Endothelial cell of umbilical vein (primary cell): ENCODE measurements at regions of chr3 and their contacts with region 1.

Region 1: DNA sequence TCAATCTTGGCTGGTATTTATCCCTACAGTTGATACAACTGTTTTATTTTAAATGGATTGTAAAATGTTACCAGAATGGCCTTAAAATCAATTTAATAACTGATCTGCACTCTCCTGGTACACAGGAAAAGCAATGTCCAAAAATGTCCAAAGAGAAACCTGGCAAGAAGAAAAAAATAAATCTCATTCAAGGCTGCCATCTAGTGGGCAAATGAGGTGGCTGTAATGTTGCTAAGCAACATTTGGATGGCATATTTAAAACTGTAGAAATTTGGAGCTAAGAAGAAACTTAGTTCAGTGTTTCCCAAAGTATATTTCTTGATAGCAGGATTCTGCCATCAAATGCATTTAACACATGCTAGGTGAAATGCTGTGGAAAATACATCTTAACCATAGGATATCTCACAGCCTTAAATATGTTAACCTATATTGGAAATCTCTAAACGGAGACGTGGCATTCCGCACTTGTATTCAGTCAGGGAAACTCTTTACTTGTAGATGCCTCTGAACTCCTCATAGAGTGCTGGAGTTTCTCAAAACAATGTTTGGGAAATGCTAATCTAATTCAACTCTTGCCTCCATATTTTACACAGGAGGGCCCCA is 216.8 kb downstream of the ERC2 start:
- DNase-seq: peak; percentile 66
- H3K4me3 ChIP-seq: no peak overlapping the region
- H3K27ac ChIP-seq: no peak overlapping the region
- H3K4me1 ChIP-seq: no peaks in the 10 kb centered on the region
- H3K27me3 ChIP-seq: no peaks in the 10 kb centered on the region
- CTCF ChIP-seq: peak; percentile 46 to 49
- POLR2A ChIP-seq: no peak

Region 2: DNA sequence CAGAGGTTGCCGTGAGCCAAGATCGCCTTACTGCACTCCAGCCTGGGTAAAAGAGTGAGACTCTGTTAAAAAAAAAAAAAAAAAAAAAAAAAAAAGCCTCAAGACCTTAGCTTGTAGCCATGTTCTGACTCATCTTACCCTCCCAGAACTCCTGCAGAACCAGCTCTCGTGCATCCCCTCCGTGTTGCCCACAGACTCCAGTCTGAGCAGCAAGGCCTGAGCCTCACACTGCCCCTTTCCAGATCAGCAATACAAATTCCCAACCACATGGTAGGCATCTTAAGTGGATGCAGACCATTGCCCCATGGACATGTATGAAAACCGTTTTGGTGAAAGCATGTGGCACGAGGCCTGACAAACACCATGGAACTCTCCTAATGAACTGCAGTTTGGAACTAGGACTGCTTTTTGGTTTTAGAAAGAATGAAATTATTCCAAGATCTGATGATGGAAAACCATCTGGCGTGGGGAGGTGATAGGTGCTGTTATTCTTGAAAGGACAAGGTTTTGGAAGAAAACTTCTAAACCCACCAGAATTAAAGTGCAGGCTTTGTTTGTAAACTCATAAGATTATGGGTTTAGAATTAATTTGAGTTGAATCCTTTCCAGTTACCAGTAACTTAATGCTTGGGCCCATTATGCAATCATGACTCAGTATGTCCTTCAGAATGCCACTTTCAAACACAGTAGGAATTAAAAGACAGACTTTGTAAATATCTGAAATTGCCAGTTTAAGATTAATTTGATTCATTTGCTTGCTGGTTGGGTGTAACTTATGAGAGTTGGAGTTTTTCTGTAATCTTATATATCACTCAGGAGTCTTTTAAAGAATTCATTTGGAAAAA is 1159.8 kb before region 1 on chr3:
- CTCF ChIA-PET with region 1: no interaction called
- POLR2A ChIA-PET with region 1: no interaction called
- dilution Hi-C with region 1: no loop called
- intact Hi-C with region 1: no loop called
- DNase-seq: no peak
- H3K4me3 ChIP-seq: no peak overlapping the region
- H3K27ac ChIP-seq: no peak overlapping the region
- H3K4me1 ChIP-seq: no peaks in the 10 kb centered on the region
- H3K27me3 ChIP-seq: no peaks in the 10 kb centered on the region
- CTCF ChIP-seq: no peak
- POLR2A ChIP-seq: no peak

Region 3: DNA sequence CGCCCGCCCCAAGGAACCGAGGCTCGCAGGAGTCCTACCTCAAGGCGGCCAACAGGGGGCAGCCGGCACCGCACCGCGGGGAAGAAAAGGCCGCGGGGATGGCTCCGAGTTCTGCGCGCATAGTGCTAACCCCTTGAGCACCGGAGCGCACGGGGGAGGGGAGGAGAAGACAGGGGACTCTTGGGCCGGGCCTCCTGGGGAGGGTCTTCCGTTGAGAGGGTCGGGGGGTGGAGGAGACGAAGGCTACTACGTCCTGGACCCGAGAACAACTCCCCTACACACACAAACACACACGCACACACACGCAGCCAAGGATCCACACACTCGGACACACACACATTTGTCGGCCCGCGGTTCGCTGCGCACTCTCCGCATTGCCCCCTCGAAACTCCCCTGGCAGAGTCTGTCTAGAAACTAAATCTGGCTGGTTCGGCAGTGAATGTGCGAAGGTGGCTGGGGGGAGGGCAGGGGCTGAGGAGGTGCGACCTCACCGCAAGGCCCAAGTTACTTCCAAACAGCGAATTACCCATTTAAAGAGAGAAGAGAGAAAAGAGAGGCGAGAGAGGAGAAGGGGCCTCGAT is 766.1 kb before region 1 on chr3:
- CTCF ChIA-PET with region 1: interaction called, 98 read pairs
- POLR2A ChIA-PET with region 1: no interaction called
- dilution Hi-C with region 1: no loop called
- intact Hi-C with region 1: loop called (anchors 1 kb)
- DNase-seq: peak; percentile 53
- H3K4me3 ChIP-seq: no peak overlapping the region
- H3K27ac ChIP-seq: no peak overlapping the region
- H3K4me1 ChIP-seq: peaks cover 14% of the 10 kb centered on the region
- H3K27me3 ChIP-seq: peaks cover 77 to 88% of the 10 kb centered on the region in 2 experiments
- CTCF ChIP-seq: peak; percentile 27 to 83
- POLR2A ChIP-seq: no peak

Region 4: DNA sequence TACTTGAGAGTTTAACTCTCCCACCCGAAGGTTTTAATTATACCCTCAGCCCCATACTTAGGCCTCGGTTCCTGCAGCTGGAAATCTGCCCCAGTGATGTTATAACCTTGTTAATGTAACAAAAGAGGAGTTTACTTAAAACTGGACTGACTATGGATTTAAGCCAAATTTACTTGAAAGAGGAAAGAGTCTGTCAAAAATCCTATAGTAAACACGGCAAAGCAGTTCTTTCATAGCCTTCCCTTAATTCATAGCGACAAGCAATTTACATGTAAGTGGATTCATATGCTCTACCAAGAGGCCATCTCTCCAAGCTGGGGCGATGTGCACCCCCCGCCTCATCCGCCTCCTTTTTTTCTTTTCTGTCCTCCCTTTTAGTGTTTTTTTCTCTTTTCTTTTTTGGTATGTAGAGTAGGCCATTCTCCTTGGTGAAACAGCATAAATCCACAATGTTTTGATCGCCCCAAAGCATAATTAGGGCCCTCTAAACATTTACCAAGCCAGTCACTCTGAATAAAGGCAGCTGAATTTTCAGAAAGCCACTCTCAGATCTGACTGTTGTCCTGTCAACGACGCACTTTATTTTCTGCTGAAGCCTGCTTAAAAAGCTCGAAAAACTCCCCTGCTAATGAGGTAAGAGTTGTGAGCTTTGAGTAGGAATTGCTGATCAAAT is 391.3 kb before region 1 on chr3:
- CTCF ChIA-PET with region 1: no interaction called
- POLR2A ChIA-PET with region 1: no interaction called
- dilution Hi-C with region 1: no loop called
- intact Hi-C with region 1: no loop called
- DNase-seq: no peak
- H3K4me3 ChIP-seq: no peak overlapping the region
- H3K27ac ChIP-seq: no peak overlapping the region
- H3K4me1 ChIP-seq: no peaks in the 10 kb centered on the region
- H3K27me3 ChIP-seq: no peaks in the 10 kb centered on the region
- CTCF ChIP-seq: no peak
- POLR2A ChIP-seq: no peak

Region 5: GRCh38 chr3:55897573-55898224 is 353.7 kb before region 1 on chr3:
- CTCF ChIA-PET with region 1: interaction called, 14 read pairs
- POLR2A ChIA-PET with region 1: no interaction called
- dilution Hi-C with region 1: no loop called
- intact Hi-C with region 1: loop called (anchors 2 kb)
- DNase-seq: peak; percentile 34
- H3K4me3 ChIP-seq: no peak overlapping the region
- H3K27ac ChIP-seq: no peak overlapping the region
- H3K4me1 ChIP-seq: peaks cover 12% of the 10 kb centered on the region
- H3K27me3 ChIP-seq: no peaks in the 10 kb centered on the region
- CTCF ChIP-seq: peak; percentile 10 to 13
- POLR2A ChIP-seq: no peak

Region 6: GRCh38 chr3:56269755-56270535 is 18.5 kb after region 1 on chr3:
- CTCF ChIA-PET with region 1: interaction called, 18 read pairs
- POLR2A ChIA-PET with region 1: no interaction called
- dilution Hi-C with region 1: no loop called
- intact Hi-C with region 1: no loop called
- DNase-seq: peak; percentile 84
- H3K4me3 ChIP-seq: no peak overlapping the region
- H3K27ac ChIP-seq: no peak overlapping the region
- H3K4me1 ChIP-seq: no peaks in the 10 kb centered on the region
- H3K27me3 ChIP-seq: no peaks in the 10 kb centered on the region
- CTCF ChIP-seq: no peak
- POLR2A ChIP-seq: no peak

Region 7: GRCh38 chr3:56309465-56309864 is 58.0 kb after region 1 on chr3:
- CTCF ChIA-PET with region 1: interaction called, 46 read pairs
- POLR2A ChIA-PET with region 1: no interaction called
- dilution Hi-C with region 1: no loop called
- intact Hi-C with region 1: no loop called
- DNase-seq: no peak
- H3K4me3 ChIP-seq: no peak overlapping the region
- H3K27ac ChIP-seq: no peak overlapping the region
- H3K4me1 ChIP-seq: no peaks in the 10 kb centered on the region
- H3K27me3 ChIP-seq: no peaks in the 10 kb centered on the region
- CTCF ChIP-seq: no peak
- POLR2A ChIP-seq: no peak

Region 8: DNA sequence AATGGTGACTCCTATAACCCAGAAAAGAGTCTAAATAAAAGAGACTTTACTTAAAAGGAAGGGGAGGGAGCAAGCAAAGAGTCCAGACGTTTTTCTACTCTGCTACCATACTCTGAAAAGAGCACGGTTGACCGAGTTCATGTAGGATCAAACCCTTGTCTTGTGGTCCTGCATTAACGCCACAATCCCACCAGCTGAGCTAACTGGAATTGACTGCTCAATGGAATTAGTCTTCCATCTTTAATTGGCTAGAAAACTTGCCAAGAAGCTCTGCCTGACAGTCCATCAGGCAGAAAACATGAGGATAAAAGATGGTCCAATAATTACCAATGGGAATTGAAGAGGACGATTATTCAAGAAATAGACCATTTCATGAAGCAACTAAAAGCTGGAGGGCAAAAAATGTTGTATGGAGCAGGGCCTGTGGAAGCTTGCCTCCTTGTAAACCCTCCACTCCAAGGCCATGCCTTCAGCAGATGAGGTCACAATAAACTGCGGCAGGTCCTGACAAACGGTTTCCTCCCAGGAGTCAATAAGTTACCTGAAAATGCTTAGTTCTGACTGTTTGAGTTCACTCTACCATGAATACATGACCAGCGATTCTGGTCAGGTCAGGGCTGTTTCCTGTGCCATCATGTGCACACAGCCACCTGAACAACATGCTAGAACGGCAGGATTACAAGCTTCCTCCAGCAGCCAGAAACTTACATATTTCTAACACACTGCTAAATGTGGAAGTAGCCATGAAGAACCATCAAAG is 585.9 kb after region 1 on chr3:
- CTCF ChIA-PET with region 1: no interaction called
- POLR2A ChIA-PET with region 1: no interaction called
- dilution Hi-C with region 1: no loop called
- intact Hi-C with region 1: no loop called
- DNase-seq: no peak
- H3K4me3 ChIP-seq: no peak overlapping the region
- H3K27ac ChIP-seq: no peak overlapping the region
- H3K4me1 ChIP-seq: peaks cover 12% of the 10 kb centered on the region
- H3K27me3 ChIP-seq: no peaks in the 10 kb centered on the region
- CTCF ChIP-seq: no peak
- POLR2A ChIP-seq: no peak